ENCODE measurements at regions of chr12 and their contacts with region 1.

Region 1: GRCh38 chr12:19757317-19757877 is 318.1 kb downstream of the AEBP2 start:
- DNase-seq: peak; percentile 64
- ATAC-seq: 0 out of 2 replicates have a peak, but pooled peaks have one; percentile 46
- H3K4me3 ChIP-seq: no peak overlapping the region
- H3K27ac ChIP-seq: no peak overlapping the region
- H3K4me1 ChIP-seq: peaks cover 3% of the 10 kb centered on the region; the same call in 1 of the 2 replicates
- H3K27me3 ChIP-seq: no peaks in the 10 kb centered on the region
- CTCF ChIP-seq: peak; percentile 72
- POLR2A ChIP-seq: no peak
- RAD21 ChIP-seq: peak; percentile 81

Region 2: GRCh38 chr12:18837025-18837424 is 920.4 kb before region 1 on chr12:
- CTCF ChIA-PET with region 1: no interaction called
- POLR2A ChIA-PET with region 1: no interaction called
- dilution Hi-C with region 1: no loop called
- in situ Hi-C with region 1: no loop called
- intact Hi-C with region 1: no loop called
- DNase-seq: peak; percentile 49
- ATAC-seq: no peak
- H3K4me3 ChIP-seq: no peak overlapping the region
- H3K27ac ChIP-seq: no peak overlapping the region
- H3K4me1 ChIP-seq: peaks cover 2% of the 10 kb centered on the region; the same call in 1 of the 2 replicates
- H3K27me3 ChIP-seq: no peaks in the 10 kb centered on the region
- CTCF ChIP-seq: no peak
- POLR2A ChIP-seq: no peak
- RAD21 ChIP-seq: no peak

Region 3: GRCh38 chr12:19819231-19819630 is 61.8 kb after region 1 on chr12:
- CTCF ChIA-PET with region 1: no interaction called
- POLR2A ChIA-PET with region 1: no interaction called
- dilution Hi-C with region 1: no loop called
- in situ Hi-C with region 1: no loop called
- intact Hi-C with region 1: no loop called
- DNase-seq: no peak
- ATAC-seq: no peak
- H3K4me3 ChIP-seq: no peak overlapping the region
- H3K27ac ChIP-seq: no peak overlapping the region
- H3K4me1 ChIP-seq: no peaks in the 10 kb centered on the region; the same call in 1 of the 2 replicates
- H3K27me3 ChIP-seq: no peaks in the 10 kb centered on the region
- CTCF ChIP-seq: no peak
- POLR2A ChIP-seq: no peak
- RAD21 ChIP-seq: no peak

Region 4: GRCh38 chr12:19893514-19893913 is 136.1 kb after region 1 on chr12:
- CTCF ChIA-PET with region 1: interaction called, 8 read pairs
- POLR2A ChIA-PET with region 1: no interaction called
- dilution Hi-C with region 1: no loop called
- in situ Hi-C with region 1: loop called (anchors 10 kb)
- intact Hi-C with region 1: loop called (anchors 5 kb)
- DNase-seq: peak; percentile 54
- ATAC-seq: peak; percentile 90
- H3K4me3 ChIP-seq: no peak overlapping the region
- H3K27ac ChIP-seq: no peak overlapping the region
- H3K4me1 ChIP-seq: peaks cover 5% of the 10 kb centered on the region
- H3K27me3 ChIP-seq: no peaks in the 10 kb centered on the region
- CTCF ChIP-seq: peak; percentile 52
- POLR2A ChIP-seq: no peak
- RAD21 ChIP-seq: peak; percentile 55

Region 5: DNA sequence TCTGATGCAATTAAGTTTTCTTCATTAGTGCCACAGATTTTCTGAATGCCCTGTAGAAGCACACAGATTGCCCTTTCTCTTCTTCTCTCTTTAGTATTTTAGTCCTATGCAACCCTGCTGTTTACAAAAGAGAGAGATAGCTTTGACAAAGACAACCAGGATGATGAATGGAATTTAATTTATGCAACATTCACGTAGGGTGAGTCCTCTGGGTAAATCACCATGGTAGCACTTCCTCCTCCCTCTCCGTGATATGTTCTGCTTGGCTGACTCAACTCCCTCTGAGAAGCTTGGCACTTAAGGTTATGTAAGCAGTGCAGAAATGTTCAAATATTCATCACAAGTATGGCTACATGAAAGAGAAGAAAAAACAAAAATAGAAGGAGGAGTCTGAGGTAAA is 210.1 kb after region 1 on chr12:
- CTCF ChIA-PET with region 1: no interaction called
- POLR2A ChIA-PET with region 1: no interaction called
- dilution Hi-C with region 1: no loop called
- in situ Hi-C with region 1: no loop called
- intact Hi-C with region 1: loop called (anchors 10 kb)
- DNase-seq: peak; percentile 96
- ATAC-seq: peak; percentile 97
- H3K4me3 ChIP-seq: no peak overlapping the region
- H3K27ac ChIP-seq: no peak overlapping the region
- H3K4me1 ChIP-seq: peaks cover 6% of the 10 kb centered on the region
- H3K27me3 ChIP-seq: no peaks in the 10 kb centered on the region
- CTCF ChIP-seq: no peak
- POLR2A ChIP-seq: no peak
- RAD21 ChIP-seq: no peak

Region 6: DNA sequence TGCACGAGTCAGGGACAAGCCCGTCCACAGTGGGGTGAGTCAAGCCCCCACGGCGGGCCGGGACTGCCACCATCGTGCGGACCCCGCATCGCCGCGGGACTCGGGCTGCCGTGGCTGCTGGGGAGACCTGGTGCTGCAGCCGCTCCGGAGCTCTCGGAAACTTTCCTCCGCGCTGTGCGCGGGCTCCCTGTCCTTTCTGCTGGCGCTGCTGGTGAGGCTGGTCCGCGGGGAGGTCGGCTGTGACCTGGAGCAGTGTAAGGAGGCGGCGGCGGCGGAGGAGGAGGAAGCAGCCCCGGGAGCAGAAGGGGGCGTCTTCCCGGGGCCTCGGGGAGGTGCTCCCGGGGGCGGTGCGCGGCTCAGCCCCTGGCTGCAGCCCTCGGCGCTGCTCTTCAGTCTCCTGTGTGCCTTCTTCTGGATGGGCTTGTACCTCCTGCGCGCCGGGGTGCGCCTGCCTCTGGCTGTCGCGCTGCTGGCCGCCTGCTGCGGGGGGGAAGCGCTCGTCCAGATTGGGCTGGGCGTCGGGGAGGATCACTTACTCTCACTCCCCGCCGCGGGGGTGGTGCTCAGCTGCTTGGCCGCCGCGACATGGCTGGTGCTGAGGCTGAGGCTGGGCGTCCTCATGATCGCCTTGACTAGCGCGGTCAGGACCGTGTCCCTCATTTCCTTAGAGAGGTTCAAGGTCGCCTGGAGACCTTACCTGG is 612.1 kb after region 1 on chr12:
- CTCF ChIA-PET with region 1: no interaction called
- POLR2A ChIA-PET with region 1: no interaction called
- dilution Hi-C with region 1: no loop called
- in situ Hi-C with region 1: no loop called
- intact Hi-C with region 1: loop called (anchors 2 kb)
- DNase-seq: peak; percentile 39
- ATAC-seq: peak; percentile 73
- H3K4me3 ChIP-seq: peak overlapping the region; percentile 89
- H3K27ac ChIP-seq: peak overlapping the region; percentile 35
- H3K4me1 ChIP-seq: no peaks in the 10 kb centered on the region
- H3K27me3 ChIP-seq: no peaks in the 10 kb centered on the region
- CTCF ChIP-seq: no peak
- POLR2A ChIP-seq: no peak
- RAD21 ChIP-seq: no peak

Region 7: DNA sequence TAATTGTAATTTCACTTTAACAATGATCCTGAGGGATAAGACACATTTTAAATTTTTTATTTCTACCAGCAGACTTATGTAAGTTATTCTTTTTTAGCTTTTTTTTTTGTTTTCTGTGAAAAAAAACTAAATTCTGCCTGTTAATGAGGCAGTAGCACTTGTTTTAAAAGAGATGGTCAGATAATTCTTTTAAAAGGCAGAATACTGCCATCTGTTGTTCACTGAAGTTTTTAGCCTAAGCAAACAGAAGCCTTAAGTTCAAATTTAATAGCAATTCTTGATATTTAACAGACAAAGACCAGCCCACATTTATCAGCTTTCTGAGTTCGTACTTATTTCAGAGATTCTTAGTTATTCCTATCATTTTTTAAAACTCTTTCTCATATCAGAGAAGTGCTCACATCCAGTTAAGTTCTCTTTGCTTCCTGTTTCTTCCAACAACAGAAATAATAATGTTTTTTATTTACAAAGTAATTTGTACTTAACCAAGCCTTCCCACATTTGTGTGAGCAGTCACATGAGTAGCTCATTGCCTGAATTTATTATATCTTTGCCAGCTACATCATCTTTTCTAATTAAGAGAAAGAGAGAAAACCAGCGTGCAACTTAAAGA is 844.4 kb after region 1 on chr12:
- CTCF ChIA-PET with region 1: no interaction called
- POLR2A ChIA-PET with region 1: no interaction called
- dilution Hi-C with region 1: no loop called
- in situ Hi-C with region 1: loop called (anchors 10 kb)
- intact Hi-C with region 1: loop called (anchors 5 kb)
- DNase-seq: peak; percentile 73
- ATAC-seq: peak; percentile 52
- H3K4me3 ChIP-seq: no peak overlapping the region
- H3K27ac ChIP-seq: no peak overlapping the region
- H3K4me1 ChIP-seq: no peaks in the 10 kb centered on the region; the same call in 1 of the 2 replicates
- H3K27me3 ChIP-seq: no peaks in the 10 kb centered on the region
- CTCF ChIP-seq: peak; percentile 66
- POLR2A ChIP-seq: no peak
- RAD21 ChIP-seq: peak; percentile 54

Measured in IMR-90 (cell line).